Activated CD4-positive, alpha-beta memory T cell treated with anti-CD3 and anti-CD28 coated beads for 36 hours (primary cell): ENCODE measurements at regions of chr7 and their contacts with region 1.

Region 1: DNA sequence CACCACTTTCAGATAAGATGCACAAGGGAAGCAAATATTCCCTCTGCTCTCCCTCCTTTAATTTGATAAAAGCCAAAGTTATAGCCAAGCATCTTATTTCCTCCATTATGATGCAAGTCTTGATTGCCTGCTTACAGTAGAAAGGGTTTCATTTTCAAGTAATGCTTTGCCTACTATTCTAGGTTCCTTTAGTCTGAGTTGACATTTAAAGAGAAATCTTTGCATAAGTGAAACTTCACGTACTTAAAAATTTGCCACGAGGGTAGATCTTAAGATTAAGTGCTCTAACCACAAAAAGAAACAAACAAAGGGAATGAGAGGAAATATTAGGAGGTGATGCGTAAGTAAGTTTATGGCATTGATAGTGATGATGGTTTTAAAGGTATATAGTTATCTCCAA is 78.1 kb upstream of the VWDE start:
- DNase-seq: no peak
- H3K4me3 Mint-ChIP-seq: peak overlapping the region; percentile 40
- H3K27ac Mint-ChIP-seq: no peak overlapping the region
- H3K4me1 Mint-ChIP-seq: peaks cover 10% of the 10 kb centered on the region
- H3K27me3 Mint-ChIP-seq: no peaks in the 10 kb centered on the region

Region 2: DNA sequence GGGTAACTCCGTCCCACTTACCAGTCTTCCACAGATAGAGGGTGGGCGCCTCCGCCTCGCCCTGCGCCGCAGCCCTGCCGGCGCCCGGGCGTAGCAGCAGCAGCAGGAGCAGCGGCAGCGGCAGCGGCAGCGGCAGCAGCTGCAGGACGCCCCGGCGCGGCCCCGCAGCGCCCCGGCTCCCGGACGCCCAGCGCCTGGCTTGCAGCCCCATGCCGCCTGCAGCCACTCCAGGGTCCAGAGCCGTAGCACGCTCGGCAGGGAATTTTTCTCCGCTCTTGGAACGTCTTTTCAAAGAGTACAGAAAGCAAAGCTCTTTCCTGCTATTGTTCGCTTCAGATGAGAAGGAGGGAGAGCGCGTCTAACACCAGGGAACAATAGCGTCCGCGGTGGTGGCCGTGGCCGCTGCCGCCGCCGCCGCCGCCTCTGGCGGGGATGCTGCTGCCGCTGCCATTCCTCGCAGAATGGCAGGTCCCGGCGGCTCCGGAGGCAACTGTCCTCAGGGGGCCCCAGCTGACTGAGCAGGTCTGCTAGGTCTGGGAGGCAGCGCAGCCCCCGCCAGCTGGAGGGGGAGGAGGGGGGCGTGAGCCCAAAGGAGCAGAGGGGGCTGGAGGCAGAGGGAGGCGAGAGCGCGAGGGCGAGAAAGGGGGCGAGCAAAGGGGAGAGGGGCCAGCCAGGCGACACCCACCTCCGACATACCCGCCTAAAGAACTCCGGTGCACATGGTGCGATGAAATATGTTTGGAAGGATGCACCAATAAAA is 649.8 kb before region 1 on chr7 and contains the start of gene THSD7A:
- CTCF ChIA-PET with region 1: no interaction called
- POLR2A ChIA-PET with region 1: no interaction called
- intact Hi-C with region 1: loop called (anchors 10 kb)
- DNase-seq: peak; percentile 11
- H3K4me3 Mint-ChIP-seq: peak within 1 kb of the TSS; percentile 44
- H3K27ac Mint-ChIP-seq: no peak within 1 kb of the TSS
- H3K4me1 Mint-ChIP-seq: peaks cover 12% of the 10 kb centered on the region
- H3K27me3 Mint-ChIP-seq: peaks cover 37% of the 10 kb centered on the region
- total RNA-seq, gene THSD7A: not detected

Region 3: DNA sequence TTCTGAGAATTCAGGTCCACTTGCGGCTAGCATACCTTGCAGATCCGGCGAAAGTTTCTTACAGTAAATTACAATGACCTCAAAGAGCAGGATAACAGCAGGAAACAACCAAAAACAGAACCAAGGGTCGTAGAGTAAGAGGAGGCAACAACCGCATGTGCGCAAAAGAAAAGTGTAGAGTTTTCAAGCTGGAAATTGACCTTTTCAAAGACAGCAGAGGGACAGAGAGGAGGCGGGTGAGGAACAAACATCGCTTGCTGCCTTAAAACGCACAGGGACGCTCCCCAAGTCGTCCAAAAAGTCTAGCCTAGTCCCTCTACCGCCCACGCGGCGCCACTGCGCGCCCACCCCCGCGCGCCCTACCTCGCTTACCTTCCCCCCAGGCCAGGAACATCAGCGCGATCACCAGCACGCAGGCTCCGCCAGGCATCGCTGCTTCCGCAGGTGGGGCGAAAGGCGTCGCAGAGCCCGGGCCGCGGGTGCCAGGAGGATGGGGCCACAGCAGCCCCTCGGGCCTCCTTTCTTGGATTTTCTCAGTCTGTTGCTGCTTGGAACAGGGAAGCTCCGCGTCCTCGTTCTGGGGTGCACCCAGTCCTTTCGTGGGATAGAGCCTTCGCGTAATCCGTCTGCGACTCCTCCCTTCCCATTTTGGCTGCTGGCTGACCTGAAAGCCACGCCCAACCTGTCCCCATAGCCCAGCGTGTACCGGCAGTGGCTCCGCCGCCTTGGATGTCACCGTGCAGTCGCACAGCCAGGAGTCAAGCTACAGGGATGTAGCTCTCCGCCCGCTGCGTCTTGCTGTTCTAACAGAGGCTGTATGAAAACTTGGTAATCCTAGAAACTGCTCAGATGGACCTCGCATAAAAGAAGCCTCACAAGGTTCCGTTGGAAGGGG is 78.2 kb before region 1 on chr7 and contains the start of gene VWDE:
- CTCF ChIA-PET with region 1: no interaction called
- POLR2A ChIA-PET with region 1: no interaction called
- intact Hi-C with region 1: loop called (anchors 5 kb)
- DNase-seq: peak; percentile 82
- H3K4me3 Mint-ChIP-seq: peak within 1 kb of the TSS; percentile 81
- H3K27ac Mint-ChIP-seq: peak within 1 kb of the TSS; percentile 80
- H3K4me1 Mint-ChIP-seq: peaks cover 19% of the 10 kb centered on the region
- H3K27me3 Mint-ChIP-seq: peaks cover 4% of the 10 kb centered on the region
- total RNA-seq, gene VWDE: 2.3 to 3.2 TPM

Region 4: GRCh38 chr7:12796397-12797127 is 314.8 kb after region 1 on chr7:
- CTCF ChIA-PET with region 1: no interaction called
- POLR2A ChIA-PET with region 1: no interaction called
- intact Hi-C with region 1: no loop called
- DNase-seq: no peak
- H3K4me3 Mint-ChIP-seq: no peak overlapping the region
- H3K27ac Mint-ChIP-seq: no peak overlapping the region
- H3K4me1 Mint-ChIP-seq: peaks cover 4% of the 10 kb centered on the region
- H3K27me3 Mint-ChIP-seq: no peaks in the 10 kb centered on the region